A673 (cell line): ENCODE measurements at regions of chr3 and their contacts with region 1.

Region 1: DNA sequence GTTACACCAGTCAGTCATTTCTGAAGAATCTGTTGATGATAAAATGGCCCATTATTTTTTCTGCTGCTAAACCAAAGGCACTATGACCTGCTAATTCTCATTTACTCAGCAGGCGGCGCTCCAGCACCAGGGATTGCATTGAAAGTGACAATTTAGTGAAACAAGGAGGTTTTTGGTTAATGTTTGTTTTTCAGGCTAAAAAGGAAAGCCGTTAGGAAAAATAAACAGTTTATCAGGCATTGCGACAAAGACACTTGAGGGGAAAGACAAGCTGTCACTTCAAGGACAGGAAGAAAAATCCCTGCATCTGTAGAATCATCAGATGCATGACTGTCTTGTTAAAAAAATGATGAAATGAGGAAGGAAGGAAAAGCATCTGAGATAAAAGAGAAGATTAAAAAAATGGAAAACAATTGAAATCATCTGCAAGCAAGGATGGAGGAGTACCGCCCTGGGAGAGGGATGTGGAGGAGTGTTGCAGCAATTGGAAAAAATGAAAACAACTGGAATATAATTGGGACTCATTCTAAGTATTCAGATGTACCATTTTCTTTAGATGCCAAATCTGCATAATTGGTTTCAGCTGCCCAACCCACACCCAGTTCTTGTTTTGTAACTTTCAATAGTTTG is 54.0 kb downstream of the NR1D2 start:
- DNase-seq: peak; percentile 82
- H3K4me3 ChIP-seq: no peak overlapping the region
- H3K27ac ChIP-seq: no peak overlapping the region
- H3K4me1 ChIP-seq: peaks cover 8% of the 10 kb centered on the region
- H3K27me3 ChIP-seq: no peaks in the 10 kb centered on the region
- CTCF ChIP-seq: peak; percentile 96

Region 2: DNA sequence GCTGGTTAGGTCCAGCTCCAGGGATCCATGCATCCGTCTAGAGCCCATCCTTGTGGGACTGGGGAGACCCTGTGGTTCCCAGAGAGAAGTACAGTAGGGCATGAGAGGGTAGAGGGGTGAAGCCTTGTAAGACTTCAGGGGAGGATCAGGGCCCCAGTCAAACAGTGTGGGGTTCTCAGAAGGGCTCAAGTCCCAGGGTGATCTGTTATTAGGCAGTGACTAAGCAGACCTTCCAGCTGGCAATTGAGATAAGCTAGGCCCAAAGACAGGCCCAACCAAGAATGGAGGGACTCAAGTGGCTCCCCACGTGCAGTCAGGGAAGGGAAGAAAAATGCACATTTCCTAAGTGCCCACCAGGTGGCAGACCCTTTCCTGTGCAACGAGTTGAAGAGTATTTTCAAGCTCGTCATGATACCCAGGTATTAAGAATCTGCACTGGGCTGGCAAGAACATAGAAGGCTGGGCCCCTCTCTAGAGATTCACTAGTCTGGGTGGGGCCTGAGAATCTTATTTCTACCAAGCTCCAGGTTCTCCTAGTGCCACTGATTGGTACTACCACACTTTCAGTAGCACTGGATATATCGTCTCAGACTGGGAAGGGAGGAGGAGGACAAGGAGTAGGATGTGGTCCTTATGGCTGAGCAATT is 186.7 kb after region 1 on chr3:
- CTCF ChIA-PET with region 1: no interaction called
- POLR2A ChIA-PET with region 1: no interaction called
- intact Hi-C with region 1: loop called (anchors 2 kb)
- DNase-seq: peak; percentile 80
- H3K4me3 ChIP-seq: no peak overlapping the region
- H3K27ac ChIP-seq: no peak overlapping the region
- H3K4me1 ChIP-seq: no peaks in the 10 kb centered on the region
- H3K27me3 ChIP-seq: no peaks in the 10 kb centered on the region
- CTCF ChIP-seq: peak; percentile 73

Region 3: GRCh38 chr3:24237971-24238767 is 239.0 kb after region 1 on chr3:
- CTCF ChIA-PET with region 1: no interaction called
- POLR2A ChIA-PET with region 1: no interaction called
- intact Hi-C with region 1: loop called (anchors 1 kb)
- DNase-seq: peak; percentile 82
- H3K4me3 ChIP-seq: no peak overlapping the region
- H3K27ac ChIP-seq: no peak overlapping the region
- H3K4me1 ChIP-seq: peaks cover 14% of the 10 kb centered on the region
- H3K27me3 ChIP-seq: no peaks in the 10 kb centered on the region
- CTCF ChIP-seq: peak; percentile 75

Region 4: DNA sequence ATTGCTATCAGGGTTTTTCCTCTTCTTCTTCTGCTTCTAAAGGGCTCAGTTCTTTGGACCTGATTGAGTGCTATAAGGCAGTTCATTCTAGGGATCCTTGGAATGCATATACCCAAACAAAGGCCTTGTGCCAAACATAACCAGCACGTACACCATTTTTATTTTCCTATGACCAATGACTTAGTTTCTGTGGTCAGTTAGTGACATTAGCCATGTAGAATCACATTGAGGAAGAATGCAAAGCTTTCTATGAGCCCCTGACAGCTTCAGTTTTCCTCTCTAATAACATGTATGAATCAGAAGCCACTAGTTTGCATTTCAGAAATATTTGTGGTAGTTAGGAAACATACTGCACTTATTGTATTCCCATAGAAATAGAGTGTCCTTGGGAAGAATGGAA is 255.5 kb after region 1 on chr3:
- CTCF ChIA-PET with region 1: no interaction called
- POLR2A ChIA-PET with region 1: no interaction called
- intact Hi-C with region 1: no loop called
- DNase-seq: no peak
- H3K4me3 ChIP-seq: no peak overlapping the region
- H3K27ac ChIP-seq: no peak overlapping the region
- H3K4me1 ChIP-seq: no peaks in the 10 kb centered on the region
- H3K27me3 ChIP-seq: peaks cover 6% of the 10 kb centered on the region
- CTCF ChIP-seq: no peak

Region 5: DNA sequence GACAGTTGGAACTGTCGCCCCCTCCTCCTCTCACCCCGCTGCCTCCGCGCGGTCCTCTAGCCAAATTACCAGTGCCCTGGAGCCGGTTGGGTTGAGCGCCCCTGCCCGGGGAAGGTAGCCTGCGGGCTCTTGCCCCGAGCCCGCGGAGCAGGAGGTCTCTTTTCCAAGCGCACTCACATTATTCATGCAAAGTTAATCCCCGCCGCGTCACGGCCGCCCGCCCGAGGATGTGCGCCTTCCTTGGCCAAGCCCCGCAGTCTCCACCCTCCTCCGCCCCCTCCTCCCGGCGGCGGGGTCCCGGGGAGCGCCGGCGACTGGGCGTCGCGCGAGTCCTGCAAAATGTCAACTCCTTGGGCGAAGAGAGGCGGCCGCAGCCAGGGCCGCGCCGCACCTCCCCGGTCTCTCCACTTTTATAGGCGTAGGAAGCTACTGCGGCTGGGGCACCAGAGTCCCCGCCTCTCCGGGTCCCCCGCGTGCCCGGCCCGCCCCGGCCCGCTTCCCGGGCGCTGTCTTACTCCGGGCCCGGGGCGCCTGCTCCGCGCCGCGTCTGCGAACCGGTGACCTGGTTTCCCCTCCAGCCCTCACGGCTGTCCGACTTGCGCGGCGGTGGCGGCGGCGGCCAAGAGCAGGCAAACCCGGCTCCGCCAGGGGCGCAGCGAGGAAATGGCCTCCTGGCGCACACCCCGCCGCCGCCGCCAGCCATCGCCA is 495.6 kb after region 1 on chr3 and contains the start of gene THRB:
- CTCF ChIA-PET with region 1: no interaction called
- POLR2A ChIA-PET with region 1: no interaction called
- intact Hi-C with region 1: loop called (anchors 1 kb)
- DNase-seq: peak; percentile 56
- H3K4me3 ChIP-seq: peak within 1 kb of the TSS; percentile 46
- H3K27ac ChIP-seq: no peak within 1 kb of the TSS
- H3K4me1 ChIP-seq: peaks cover 11% of the 10 kb centered on the region
- H3K27me3 ChIP-seq: peaks cover 53% of the 10 kb centered on the region
- CTCF ChIP-seq: peak; percentile 28; the same call in 1 of the 2 replicates
- total RNA-seq, gene THRB: 0.11 and 0.22 TPM in 2 replicates